ENCODE measurements at regions of chr9 and their contacts with region 1.

Region 1: GRCh38 chr9:136339173-136339957 is 12.0 kb downstream of the GPSM1 start:
- DNase-seq: peak; percentile 54
- ATAC-seq: peak; percentile 61
- H3K4me3 Mint-ChIP-seq: no peak overlapping the region
- H3K27ac Mint-ChIP-seq: no peak overlapping the region
- H3K4me1 Mint-ChIP-seq: peaks cover 5% of the 10 kb centered on the region
- H3K27me3 Mint-ChIP-seq: no peaks in the 10 kb centered on the region
- CTCF ChIP-seq: no peak

Region 2: GRCh38 chr9:136400038-136400834 is 60.9 kb after region 1 on chr9 and contains the start of gene SNAPC4:
- CTCF ChIA-PET with region 1: no interaction called
- POLR2A ChIA-PET with region 1: no interaction called
- intact Hi-C with region 1: loop called (anchors 1 kb)
- DNase-seq: peak; percentile 88
- ATAC-seq: peak; percentile 76
- H3K4me3 Mint-ChIP-seq: peak within 1 kb of the TSS; percentile 87
- H3K27ac Mint-ChIP-seq: peak within 1 kb of the TSS; percentile 46
- H3K4me1 Mint-ChIP-seq: peaks cover 48% of the 10 kb centered on the region
- H3K27me3 Mint-ChIP-seq: no peaks in the 10 kb centered on the region
- CTCF ChIP-seq: peak; percentile 21
- total RNA-seq, gene SNAPC4: 20.0 and 22.2 TPM in 2 replicates

Region 3: DNA sequence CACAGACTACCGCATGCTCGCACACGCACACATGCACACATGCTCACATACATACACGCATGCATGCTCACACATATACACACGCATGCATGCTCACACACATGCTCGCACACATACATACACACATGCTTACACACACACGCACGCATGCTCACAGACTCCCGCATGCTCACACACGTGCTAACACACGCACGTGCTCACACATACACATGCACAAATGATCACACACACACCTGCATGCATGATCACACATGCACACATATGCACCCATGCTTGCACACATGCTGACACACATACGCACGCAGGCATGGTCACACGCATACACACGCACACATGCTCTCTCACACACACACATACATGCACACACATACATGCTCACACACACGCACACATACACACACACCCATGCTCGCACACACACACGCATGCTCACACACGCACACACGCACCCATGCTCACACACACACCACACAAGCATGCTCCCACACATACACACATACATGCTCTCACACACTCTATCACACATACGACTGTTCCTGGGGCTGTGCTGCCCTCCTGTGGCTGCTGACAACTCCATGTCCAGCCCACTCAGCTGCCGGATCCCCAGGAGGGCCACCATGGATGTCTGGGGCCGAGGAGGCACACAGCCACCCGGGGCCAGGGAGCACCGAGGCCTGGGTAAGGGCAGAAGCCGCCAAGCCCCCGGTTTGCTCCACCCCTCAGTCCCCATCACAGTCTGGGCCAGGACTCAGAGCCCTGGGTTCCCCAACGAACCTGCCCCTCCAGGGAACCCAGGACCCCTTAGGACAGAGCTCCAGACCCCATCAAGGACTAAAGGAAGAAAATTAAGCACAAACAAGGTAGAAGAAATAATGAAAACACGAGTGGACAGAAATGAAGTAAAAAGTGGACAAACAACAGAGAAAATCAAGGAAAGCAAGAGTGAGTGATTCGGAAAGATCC is 292.0 kb after region 1 on chr9:
- CTCF ChIA-PET with region 1: no interaction called
- POLR2A ChIA-PET with region 1: no interaction called
- intact Hi-C with region 1: loop called (anchors 1 kb)
- DNase-seq: peak; percentile 74
- ATAC-seq: peak; percentile 93
- H3K4me3 Mint-ChIP-seq: no peak overlapping the region
- H3K27ac Mint-ChIP-seq: no peak overlapping the region
- H3K4me1 Mint-ChIP-seq: no peaks in the 10 kb centered on the region
- H3K27me3 Mint-ChIP-seq: peaks cover 14% of the 10 kb centered on the region
- CTCF ChIP-seq: no peak

Region 4: GRCh38 chr9:136644598-136645351 is 305.4 kb after region 1 on chr9:
- CTCF ChIA-PET with region 1: no interaction called
- POLR2A ChIA-PET with region 1: no interaction called
- intact Hi-C with region 1: loop called (anchors 1 kb)
- DNase-seq: peak; percentile 70
- ATAC-seq: peak; percentile 97
- H3K4me3 Mint-ChIP-seq: no peak overlapping the region
- H3K27ac Mint-ChIP-seq: no peak overlapping the region
- H3K4me1 Mint-ChIP-seq: peaks cover 25% of the 10 kb centered on the region
- H3K27me3 Mint-ChIP-seq: peaks cover 20% of the 10 kb centered on the region
- CTCF ChIP-seq: peak; percentile 24